ENCODE measurements at regions of chr3 and their contacts with region 1.

Region 1: GRCh38 chr3:141231101-141231935 is at the start of gene PXYLP1:
- DNase-seq: peak; percentile 77 to 91 (median 90)
- ATAC-seq: peak; percentile 88 to 89
- H3K4me3 Mint-ChIP-seq: peak within 1 kb of the TSS; percentile 89 to 98 (median 93)
- H3K27ac Mint-ChIP-seq: peak within 1 kb of the TSS; percentile 95 to 99 (median 98)
- H3K4me1 Mint-ChIP-seq: peaks cover 33 to 70% (median 52%) of the 10 kb centered on the region in 4 donors
- H3K27me3 Mint-ChIP-seq: no peaks in the 10 kb centered on the region
- polyA plus RNA-seq, gene PXYLP1: 9.9 to 18.3 (median 16.9) TPM

Region 2: GRCh38 chr3:141243271-141243707 is 12.0 kb after region 1 on chr3:
- POLR2A ChIA-PET with region 1: interaction called, 99 read pairs
- DNase-seq: peak; percentile 47 to 90 (median 74)
- ATAC-seq: peak; percentile 99
- H3K4me3 Mint-ChIP-seq: peak overlapping the region; percentile 59 to 83 (median 75)
- H3K27ac Mint-ChIP-seq: peak overlapping the region; percentile 77 to 95 (median 90)
- H3K4me1 Mint-ChIP-seq: peaks cover 20 to 73% (median 42%) of the 10 kb centered on the region in 4 donors
- H3K27me3 Mint-ChIP-seq: no peaks in the 10 kb centered on the region

Region 3: DNA sequence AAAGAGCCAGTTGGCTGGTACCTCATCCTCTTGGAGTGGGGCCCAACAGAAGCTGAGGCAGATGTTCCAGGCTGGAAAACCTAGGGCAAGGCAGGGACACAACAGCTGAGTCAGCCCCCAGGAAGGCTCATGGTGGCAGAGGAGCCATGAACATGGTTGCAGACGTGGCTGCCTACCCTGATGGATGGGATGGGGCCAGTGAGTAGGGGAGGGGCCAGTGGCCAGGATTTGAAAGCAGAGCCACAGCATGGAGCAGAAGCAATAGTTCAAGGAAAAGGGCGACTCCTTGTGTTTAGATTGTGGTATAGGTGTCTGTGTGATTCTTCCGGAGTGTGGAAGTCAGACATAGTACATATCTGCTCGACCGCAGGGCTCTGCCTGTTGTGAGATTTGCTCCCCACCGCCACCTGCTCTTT is 24.5 kb after region 1 on chr3:
- POLR2A ChIA-PET with region 1: interaction called, 99 read pairs
- DNase-seq: peak in 8 of 10 donors; percentile 40 to 66 (median 57)
- ATAC-seq: peak; percentile 98 to 99
- H3K4me3 Mint-ChIP-seq: peak overlapping the region in 8 of 10 donors; percentile 1 to 66 (median 24)
- H3K27ac Mint-ChIP-seq: peak overlapping the region in 9 of 10 donors; percentile 7 to 93 (median 84)
- H3K4me1 Mint-ChIP-seq: peaks cover 14 to 81% (median 29%) of the 10 kb centered on the region in 4 donors
- H3K27me3 Mint-ChIP-seq: no peaks in the 10 kb centered on the region

Region 4: DNA sequence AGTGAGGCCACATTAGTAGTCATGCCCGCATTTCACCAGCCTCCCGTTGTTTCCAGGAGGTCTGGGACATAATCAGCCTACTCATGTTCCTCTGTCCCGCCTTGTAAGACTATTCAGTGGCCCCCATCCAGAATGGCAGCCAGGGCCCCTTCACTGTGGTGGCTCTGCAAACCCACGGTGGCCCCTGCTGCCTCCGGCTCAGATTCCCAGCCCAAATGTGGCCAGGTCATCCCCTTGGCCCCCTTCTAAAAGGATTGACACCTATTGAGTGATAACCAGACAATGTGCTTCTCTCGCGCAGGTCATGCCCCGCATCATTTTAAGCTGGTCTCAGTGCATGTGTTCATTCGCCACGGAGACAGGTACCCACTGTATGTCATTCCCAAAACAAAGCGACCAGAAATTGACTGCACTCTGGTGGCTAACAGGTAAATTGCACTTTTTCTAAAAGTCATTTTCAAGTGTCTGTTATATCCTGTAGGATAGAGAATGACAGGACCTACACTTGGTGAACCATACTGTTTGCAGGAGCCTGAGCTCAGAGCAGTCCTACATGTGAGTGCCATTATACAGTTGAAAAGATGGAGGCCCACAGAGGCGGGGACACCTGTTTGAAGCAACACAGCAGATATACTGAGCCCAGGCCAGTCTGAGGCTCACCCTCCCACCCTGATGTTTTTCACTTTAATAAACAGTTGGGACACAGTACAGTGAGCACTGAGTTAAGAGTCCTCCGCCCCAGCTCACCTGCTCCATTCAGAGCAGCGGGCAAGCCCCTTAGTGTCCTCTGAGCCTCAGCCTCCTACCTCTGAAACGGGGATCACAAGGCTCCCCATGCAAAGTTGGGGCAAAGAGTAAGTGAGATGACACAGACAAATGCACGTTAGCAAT is 48.0 kb after region 1 on chr3:
- POLR2A ChIA-PET with region 1: interaction called, 425 read pairs
- DNase-seq: peak in 6 of 10 donors; percentile 17 to 67 (median 43)
- ATAC-seq: peak; percentile 88 to 93
- H3K4me3 Mint-ChIP-seq: peak overlapping the region in 2 of 10 donors; percentile 18 to 22
- H3K27ac Mint-ChIP-seq: peak overlapping the region in 7 of 10 donors; percentile 22 to 83 (median 54)
- H3K4me1 Mint-ChIP-seq: peaks cover 17 to 31% (median 22%) of the 10 kb centered on the region in 4 donors
- H3K27me3 Mint-ChIP-seq: no peaks in the 10 kb centered on the region